Posterior cingulate gyrus (tissue), 11 donors: ENCODE measurements at regions of chr12 and their contacts with region 1.

Region 1: GRCh38 chr12:949453-950191 is at the start of gene RAD52:
- DNase-seq: peak; percentile 94 to 99 (median 97)

Region 2: GRCh38 chr12:569803-570434 is 379.7 kb before region 1 on chr12:
- intact Hi-C with region 1: loop called (anchors 1 kb)
- DNase-seq: peak; percentile 71 to 97 (median 86)

Region 3: GRCh38 chr12:810671-811415 is 138.8 kb before region 1 on chr12:
- intact Hi-C with region 1: loop called (anchors 2 kb)
- DNase-seq: peak in 1 of 10 donors; percentile 61

Region 4: DNA sequence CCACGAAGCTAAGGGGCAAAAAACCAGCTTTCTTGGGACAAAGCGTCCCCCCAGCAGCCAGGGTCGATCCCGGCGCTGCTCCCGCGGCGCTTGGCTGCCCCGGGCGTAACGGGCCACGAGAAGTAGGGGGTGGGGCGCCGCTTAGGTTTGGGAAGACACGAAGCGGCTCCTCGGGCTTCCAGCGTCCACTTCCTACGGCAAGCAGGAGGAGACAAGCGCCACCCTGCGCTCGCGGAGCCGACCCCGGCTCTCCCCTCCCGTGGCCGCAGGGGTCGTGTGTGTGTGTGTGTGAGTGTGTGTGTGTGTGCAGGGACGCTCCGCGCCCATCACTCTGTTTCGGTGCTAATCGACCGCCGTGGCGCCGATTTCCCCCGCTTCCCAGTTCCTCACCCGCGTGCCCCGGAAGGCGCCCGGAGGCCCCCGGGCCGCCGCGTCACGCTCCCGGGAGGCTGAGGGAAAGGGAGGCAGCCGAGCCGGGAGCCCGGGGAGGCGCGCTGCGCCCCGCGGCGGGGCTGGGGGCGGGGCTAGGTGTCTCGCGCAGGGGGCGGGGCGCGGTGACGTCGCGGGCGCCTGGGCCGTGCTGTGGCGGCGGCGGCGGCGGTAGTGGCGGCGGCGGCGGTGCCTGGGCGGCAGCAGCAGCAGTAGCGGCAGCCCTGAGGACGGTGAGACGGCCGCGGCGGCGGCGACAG is 41.2 kb after region 1 on chr12 and contains the start of gene ERC1:
- intact Hi-C with region 1: loop called (anchors 2 kb)
- DNase-seq: peak; percentile 75 to 98 (median 86)

Region 5: GRCh38 chr12:1059162-1059561 is 109.5 kb after region 1 on chr12:
- intact Hi-C with region 1: no loop called
- DNase-seq: no peak

Region 6: DNA sequence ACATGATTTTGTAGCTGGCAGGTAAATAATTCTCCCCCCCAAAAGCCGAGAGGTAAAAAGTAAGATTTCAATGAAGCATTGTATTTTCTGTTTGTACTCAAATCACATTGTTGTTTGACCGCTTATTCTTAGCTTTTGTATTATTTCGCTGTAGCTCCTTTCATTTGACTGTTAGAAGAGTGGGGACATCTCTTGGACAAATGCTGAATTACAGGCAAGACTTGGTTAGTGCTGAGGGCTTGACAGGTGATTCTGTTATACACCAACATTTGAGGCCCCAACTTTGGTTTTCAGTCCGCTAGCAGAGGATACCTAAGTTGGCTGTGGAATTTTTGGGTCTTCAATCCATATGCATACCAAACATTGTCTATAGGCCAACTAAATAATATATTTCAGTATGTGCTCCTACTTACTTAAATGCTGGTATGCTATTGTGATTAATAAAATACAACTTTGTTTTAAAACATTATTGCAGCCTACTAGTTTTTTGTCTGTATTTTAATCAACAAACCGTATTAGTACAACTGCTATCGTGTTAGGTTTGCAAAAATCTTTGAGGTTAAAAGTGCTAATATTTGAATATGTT is 143.6 kb after region 1 on chr12:
- intact Hi-C with region 1: loop called (anchors 5 kb)
- DNase-seq: no peak